A673 (cell line): ENCODE measurements at regions of chr7 and their contacts with region 1.

Region 1: GRCh38 chr7:107715531-107715930 is 28.4 kb upstream of the CBLL1 start:
- DNase-seq: no peak
- H3K4me3 ChIP-seq: no peak overlapping the region
- H3K27ac ChIP-seq: no peak overlapping the region
- H3K4me1 ChIP-seq: no peaks in the 10 kb centered on the region
- H3K27me3 ChIP-seq: peaks cover 5% of the 10 kb centered on the region
- CTCF ChIP-seq: no peak

Region 2: DNA sequence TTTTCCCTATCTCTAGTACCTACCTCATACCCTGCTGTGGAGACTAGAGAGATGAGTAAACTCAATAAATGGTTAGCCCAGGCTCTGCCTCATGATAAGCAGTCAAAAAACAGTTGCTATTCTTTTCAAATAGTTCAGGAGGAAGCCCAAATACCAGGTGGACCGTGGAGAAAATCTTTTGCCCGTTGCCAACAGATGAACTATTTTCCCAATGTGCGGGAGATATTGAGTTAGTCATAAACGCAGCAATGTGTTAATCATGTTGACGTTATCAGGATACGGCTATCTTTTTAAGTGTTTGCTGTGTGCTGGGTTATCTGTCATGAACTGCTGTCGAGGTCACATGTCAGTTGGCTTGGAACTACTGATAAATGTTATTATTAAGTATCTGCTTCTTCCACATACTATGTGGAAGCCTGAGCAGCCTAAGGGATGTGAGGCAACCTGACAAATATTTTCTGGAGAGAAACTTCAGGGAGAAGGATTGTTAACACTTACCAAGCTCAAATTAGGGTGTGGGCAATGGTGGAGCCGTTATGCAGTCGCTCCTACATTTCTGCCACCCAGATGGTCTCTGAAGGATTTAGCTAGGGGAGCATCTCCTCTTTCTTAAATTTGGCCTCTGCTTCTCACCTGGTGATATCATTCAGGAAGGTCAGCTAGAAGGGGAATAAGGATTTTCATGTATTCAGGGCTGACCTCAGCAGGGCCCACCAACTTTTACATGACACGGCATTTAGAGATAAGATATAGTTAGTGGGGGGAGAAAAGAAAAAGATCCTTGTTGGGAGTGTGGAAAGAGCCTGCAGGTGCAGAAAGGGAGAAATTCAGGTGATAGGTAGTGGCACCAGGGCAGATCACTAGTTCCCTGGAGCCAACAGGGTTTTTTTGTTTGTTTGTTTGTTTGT is 121.0 kb after region 1 on chr7:
- CTCF ChIA-PET with region 1: no interaction called
- POLR2A ChIA-PET with region 1: interaction called, 14 read pairs
- intact Hi-C with region 1: no loop called
- DNase-seq: no peak
- H3K4me3 ChIP-seq: no peak overlapping the region
- H3K27ac ChIP-seq: no peak overlapping the region
- H3K4me1 ChIP-seq: no peaks in the 10 kb centered on the region
- H3K27me3 ChIP-seq: peaks cover 16% of the 10 kb centered on the region
- CTCF ChIP-seq: no peak